ENCODE measurements at regions of chr12 and their contacts with region 1.

Region 1: DNA sequence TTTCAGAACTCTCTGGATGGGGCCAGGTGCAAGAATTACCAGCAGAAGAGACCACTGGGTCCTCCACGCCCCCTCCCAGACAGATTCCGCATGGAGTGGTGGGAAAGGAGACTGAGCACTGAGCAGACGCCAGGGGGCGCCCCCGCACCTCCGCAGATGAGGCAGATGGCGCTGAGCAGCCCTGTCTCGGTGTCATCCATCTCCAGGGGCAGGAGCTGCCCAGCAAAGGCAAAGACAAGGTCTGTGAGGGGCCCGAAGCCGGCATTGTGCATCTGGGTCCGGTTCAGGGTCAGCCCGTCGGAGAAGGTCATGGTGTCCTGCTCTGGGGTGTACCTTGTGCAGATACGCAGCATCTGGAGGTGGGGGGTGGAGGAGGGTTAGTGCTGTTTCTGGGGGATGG is 6.3 kb upstream of the ITGB7 start:
- DNase-seq: peak; percentile 72
- H3K4me3 Mint-ChIP-seq: no peak overlapping the region
- H3K27ac Mint-ChIP-seq: no peak overlapping the region
- H3K4me1 Mint-ChIP-seq: peaks cover 24% of the 10 kb centered on the region
- H3K27me3 Mint-ChIP-seq: no peaks in the 10 kb centered on the region
- CTCF ChIP-seq: peak; percentile 93

Region 2: DNA sequence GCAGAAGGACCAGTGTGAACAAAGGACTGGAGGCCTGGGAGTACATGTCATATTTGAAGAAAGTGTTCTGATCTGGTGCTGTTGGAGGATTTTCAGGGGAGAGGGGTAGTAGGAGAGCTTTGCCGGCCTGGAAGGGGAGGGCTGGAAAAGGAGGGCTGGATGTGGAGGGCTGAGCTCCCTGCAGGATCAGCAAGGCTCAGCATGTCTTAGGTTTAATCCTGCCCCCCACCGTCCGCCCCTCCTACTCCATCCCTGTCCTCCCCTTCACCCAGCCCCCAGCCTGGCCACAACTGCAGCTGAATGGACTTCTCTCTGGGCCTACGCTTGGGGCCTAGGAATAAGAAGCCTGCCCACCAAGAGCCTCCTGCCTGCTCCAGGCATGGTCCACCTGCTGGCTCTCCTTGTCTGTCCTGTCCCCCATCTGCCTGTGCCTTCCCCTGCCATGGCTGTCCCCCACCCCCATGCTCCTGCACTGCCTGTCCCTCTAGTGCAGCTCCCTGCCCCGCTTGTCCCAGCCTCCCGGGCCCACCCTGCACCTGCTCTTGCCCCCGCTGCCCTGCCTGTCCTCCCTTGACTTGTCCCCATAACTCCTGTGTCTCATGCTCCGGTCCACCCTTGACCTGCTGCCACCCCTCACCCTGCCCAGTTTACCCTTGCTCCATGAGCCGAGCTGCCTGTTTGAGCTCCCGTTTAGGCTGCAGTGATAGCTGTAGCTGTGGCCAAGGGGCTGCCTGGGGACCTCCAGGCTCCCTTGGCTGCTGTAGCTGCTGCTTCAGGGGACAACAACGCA is 28.5 kb after region 1 on chr12:
- CTCF ChIA-PET with region 1: interaction called, 11 read pairs
- POLR2A ChIA-PET with region 1: no interaction called
- intact Hi-C with region 1: no loop called
- DNase-seq: no peak
- H3K4me3 Mint-ChIP-seq: no peak overlapping the region
- H3K27ac Mint-ChIP-seq: no peak overlapping the region
- H3K4me1 Mint-ChIP-seq: peaks cover under 1% of the 10 kb centered on the region
- H3K27me3 Mint-ChIP-seq: peaks cover 35% of the 10 kb centered on the region
- CTCF ChIP-seq: no peak

Region 3: DNA sequence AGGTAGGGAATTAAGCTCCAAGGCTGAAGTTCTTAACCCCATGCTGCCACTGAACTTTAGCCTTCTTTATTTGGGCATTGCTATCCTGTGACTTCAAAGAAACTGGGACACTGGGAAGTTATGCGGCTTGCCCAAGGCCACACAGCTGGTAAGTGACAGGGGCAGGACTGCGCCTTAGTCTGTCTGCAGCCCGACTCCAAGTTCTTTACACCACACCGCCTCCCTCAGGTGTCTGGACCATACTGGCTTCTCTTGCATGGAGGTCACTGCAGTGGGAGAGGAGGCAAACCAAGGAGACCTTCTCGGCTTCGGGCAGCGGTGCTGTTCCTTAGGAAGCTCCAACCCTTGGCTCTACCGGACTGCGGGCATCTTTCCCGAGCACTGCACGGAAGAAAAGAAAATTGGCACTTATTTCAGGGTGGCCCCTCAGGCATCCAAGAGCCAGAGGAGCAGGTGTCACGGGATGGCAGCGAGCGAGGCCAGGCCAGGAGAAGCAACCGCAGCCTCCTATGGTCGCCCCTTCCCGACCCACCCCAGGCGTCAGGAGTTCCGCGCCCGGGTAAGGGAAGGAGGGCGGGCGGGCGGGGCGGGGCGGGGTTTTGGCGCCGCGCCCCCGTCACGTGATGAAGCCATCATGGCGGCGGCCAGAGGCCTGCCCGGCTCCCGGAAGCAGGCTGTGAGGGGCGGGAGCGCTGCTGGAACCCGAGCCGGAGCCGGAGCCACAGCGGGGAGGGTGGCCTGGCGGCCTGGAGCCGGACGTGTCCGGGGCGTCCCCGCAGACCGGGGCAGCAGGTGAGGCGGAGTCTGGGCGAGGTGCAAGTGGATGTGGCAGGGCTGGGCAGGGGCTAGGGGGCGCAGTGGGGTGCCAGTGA is 38.4 kb after region 1 on chr12:
- CTCF ChIA-PET with region 1: interaction called, 49 read pairs
- POLR2A ChIA-PET with region 1: interaction called, 43 read pairs
- intact Hi-C with region 1: loop called (anchors 1 kb)
- DNase-seq: peak; percentile 77
- H3K4me3 Mint-ChIP-seq: peak overlapping the region; percentile 87
- H3K27ac Mint-ChIP-seq: peak overlapping the region; percentile 83
- H3K4me1 Mint-ChIP-seq: peaks cover 25% of the 10 kb centered on the region
- H3K27me3 Mint-ChIP-seq: no peaks in the 10 kb centered on the region
- CTCF ChIP-seq: peak; percentile 48

Region 4: DNA sequence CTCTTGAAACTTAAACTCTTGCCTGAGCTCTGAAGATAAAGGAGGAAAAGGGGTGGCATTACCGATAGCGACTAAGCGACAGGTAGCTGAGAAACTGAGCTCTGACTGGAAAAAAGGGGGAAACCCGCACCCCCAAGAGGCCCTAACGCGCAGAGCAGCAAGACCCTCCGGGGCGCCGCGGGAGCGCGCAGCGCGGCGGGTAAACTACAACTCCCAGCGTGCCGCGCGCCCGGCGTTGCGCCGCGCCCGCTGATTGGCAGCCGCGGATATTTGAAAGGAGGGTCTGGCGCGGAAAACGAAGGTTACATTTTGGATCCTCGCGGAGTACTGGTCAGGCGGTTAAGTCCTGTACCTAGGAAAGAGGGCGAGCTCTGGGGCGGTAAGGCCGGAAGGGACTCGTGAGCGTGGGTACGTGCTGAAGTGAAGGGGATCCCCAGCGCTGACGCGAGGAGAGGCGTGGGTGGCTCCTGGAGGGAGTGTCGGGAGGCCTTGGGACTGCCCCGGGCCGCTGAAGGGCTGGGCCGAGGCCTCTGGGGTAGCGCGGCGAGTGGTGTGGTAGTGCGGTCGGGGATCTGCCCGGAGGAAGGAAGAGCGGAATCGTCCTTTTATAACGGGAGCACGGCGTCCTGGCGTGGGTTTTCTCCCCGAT is 54.8 kb after region 1 on chr12 and contains the start of gene ESPL1:
- CTCF ChIA-PET with region 1: interaction called, 42 read pairs
- POLR2A ChIA-PET with region 1: interaction called, 5 read pairs
- intact Hi-C with region 1: loop called (anchors 5 kb)
- DNase-seq: peak; percentile 71
- H3K4me3 Mint-ChIP-seq: peak within 1 kb of the TSS; percentile 90
- H3K27ac Mint-ChIP-seq: peak within 1 kb of the TSS; percentile 76
- H3K4me1 Mint-ChIP-seq: peaks cover 15% of the 10 kb centered on the region
- H3K27me3 Mint-ChIP-seq: no peaks in the 10 kb centered on the region
- CTCF ChIP-seq: no peak
- total RNA-seq, gene ESPL1: 9.8 and 12.1 TPM in 2 replicates

Region 5: DNA sequence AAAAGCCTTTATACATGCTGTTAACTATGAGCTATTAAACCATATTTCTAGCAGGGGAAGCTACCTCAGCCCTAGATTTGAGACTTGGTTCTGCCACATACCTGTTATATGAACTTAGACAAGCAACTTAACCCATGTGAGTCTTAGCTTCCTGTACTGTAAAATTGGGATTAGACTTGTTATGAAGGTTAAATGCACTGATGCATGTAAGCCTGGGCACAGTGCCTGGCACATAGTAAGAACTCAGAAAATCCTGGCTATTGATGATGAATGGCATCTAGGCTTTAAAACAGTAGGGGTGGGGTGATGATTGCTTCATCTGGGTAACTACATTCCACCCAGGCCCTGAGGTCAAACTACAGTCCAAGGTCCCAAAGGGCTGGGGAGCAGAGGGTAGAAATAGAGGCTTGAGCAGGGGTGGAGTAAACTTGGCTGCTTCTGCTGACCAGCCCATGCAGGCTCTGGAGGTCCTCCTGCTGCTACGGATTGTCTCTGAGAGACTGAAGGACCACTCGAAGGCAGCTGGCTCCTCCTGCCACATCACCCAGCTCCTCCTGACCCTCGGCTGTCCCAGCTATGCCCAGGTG is 66.0 kb after region 1 on chr12:
- CTCF ChIA-PET with region 1: interaction called, 275 read pairs
- POLR2A ChIA-PET with region 1: no interaction called
- intact Hi-C with region 1: no loop called
- DNase-seq: no peak
- H3K4me3 Mint-ChIP-seq: no peak overlapping the region
- H3K27ac Mint-ChIP-seq: no peak overlapping the region
- H3K4me1 Mint-ChIP-seq: no peaks in the 10 kb centered on the region
- H3K27me3 Mint-ChIP-seq: no peaks in the 10 kb centered on the region
- CTCF ChIP-seq: no peak

Region 6: DNA sequence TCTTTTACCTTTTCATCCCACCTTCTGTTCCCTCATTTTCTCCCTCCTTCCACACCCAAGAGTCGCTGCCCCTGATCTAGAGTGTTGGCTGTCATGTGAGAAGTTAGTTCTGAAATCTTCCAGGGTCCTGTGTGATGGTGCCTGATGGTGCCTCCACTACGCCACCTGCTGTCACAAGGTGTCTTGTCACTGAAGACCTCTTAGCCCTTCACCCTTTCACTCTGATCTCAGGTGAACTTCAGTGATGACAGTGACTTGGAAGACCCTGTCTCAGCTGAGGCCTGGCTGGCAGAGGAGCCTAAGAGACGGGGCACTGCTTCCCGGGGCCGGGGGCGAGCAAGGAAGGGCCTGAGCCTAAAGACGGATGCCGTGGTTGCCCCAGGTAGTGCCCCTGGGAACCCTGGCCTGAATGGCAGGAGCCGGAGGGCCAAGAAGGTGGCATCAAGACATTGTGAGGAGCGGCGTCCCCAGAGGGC is 74.4 kb after region 1 on chr12:
- CTCF ChIA-PET with region 1: interaction called, 275 read pairs
- POLR2A ChIA-PET with region 1: interaction called, 4 read pairs
- intact Hi-C with region 1: loop called (anchors 1 kb)
- DNase-seq: peak; percentile 61
- H3K4me3 Mint-ChIP-seq: no peak overlapping the region
- H3K27ac Mint-ChIP-seq: peak overlapping the region; percentile 24
- H3K4me1 Mint-ChIP-seq: peaks cover 6% of the 10 kb centered on the region
- H3K27me3 Mint-ChIP-seq: no peaks in the 10 kb centered on the region
- CTCF ChIP-seq: peak; percentile 74

Measured in MCF 10A (cell line).